Upper lobe of right lung (tissue), 1 donor: ENCODE measurements at regions of chr6 and their contacts with region 1.

Region 1: GRCh38 chr6:32974541-32975308 is 6.3 kb downstream of the BRD2 start:
- DNase-seq: no peak
- ATAC-seq: no peak
- H3K4me3 ChIP-seq: peak overlapping the region; percentile 74
- H3K27ac ChIP-seq: no peak overlapping the region
- H3K4me1 ChIP-seq: peaks cover 35% of the 10 kb centered on the region
- H3K27me3 ChIP-seq: no peaks in the 10 kb centered on the region
- CTCF ChIP-seq: no peak

Region 2: DNA sequence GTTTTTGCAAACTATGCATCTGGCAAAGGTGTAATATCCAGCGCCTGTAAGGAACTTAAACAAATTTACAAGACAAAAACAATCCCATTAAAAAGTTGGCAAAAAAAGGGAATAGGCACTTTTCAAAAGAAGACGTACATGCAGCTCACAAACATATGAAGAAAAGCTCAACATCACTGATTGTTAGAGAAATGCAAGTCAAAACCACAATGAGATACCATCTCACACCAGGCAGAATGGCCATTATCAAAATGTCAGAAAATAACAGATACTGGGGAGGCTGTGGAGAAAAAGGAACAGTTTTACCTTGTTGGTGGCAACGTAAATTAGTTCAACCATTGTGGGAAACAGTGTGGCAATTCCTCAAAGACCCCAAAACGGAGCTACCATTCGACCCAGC is 657.2 kb before region 1 on chr6:
- intact Hi-C with region 1: no loop called
- DNase-seq: no peak
- ATAC-seq: no peak
- H3K4me3 ChIP-seq: no peak overlapping the region
- H3K27ac ChIP-seq: no peak overlapping the region
- H3K4me1 ChIP-seq: no peaks in the 10 kb centered on the region
- H3K27me3 ChIP-seq: no peaks in the 10 kb centered on the region
- CTCF ChIP-seq: no peak

Region 3: GRCh38 chr6:32937230-32937633 is 37.5 kb before region 1 on chr6:
- intact Hi-C with region 1: loop called (anchors 5 kb)
- DNase-seq: no peak
- ATAC-seq: peak; percentile 55
- H3K4me3 ChIP-seq: no peak overlapping the region
- H3K27ac ChIP-seq: peak overlapping the region; percentile 60
- H3K4me1 ChIP-seq: peaks cover 19% of the 10 kb centered on the region
- H3K27me3 ChIP-seq: no peaks in the 10 kb centered on the region
- CTCF ChIP-seq: no peak

Region 4: DNA sequence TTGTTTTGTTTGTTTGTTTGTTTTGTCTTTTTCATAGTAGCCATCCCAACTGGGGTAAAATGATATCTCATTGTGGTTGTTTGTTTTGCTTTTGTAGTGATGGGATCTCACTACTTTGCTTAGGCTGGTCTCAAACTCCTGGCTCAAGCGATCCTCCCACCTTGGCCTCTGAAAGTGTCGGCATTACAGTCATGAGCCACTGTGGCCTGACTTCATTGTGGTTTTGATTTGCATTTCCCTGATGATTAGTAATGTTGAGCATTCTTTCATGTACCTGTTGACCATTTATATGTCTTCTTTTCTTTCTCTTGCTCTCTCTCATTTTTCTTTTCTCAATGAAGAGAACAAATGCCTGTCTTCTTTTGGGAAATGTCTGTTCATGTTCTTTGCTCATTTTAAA is 65.4 kb after region 1 on chr6:
- intact Hi-C with region 1: no loop called
- DNase-seq: no peak
- ATAC-seq: no peak
- H3K4me3 ChIP-seq: no peak overlapping the region
- H3K27ac ChIP-seq: no peak overlapping the region
- H3K4me1 ChIP-seq: no peaks in the 10 kb centered on the region
- H3K27me3 ChIP-seq: no peaks in the 10 kb centered on the region
- CTCF ChIP-seq: no peak

Region 5: GRCh38 chr6:33746036-33746600 is 771.4 kb after region 1 on chr6:
- intact Hi-C with region 1: no loop called
- DNase-seq: no peak
- ATAC-seq: peak; percentile 16
- H3K4me3 ChIP-seq: peak overlapping the region; percentile 48
- H3K27ac ChIP-seq: peak overlapping the region; percentile 84
- H3K4me1 ChIP-seq: peaks cover 11% of the 10 kb centered on the region
- H3K27me3 ChIP-seq: no peaks in the 10 kb centered on the region
- CTCF ChIP-seq: no peak